HepG2 (cell line): ENCODE measurements at regions of chr18 and their contacts with region 1.

Region 1: GRCh38 chr18:37537868-37538525 is 27.6 kb downstream of the CELF4 start:
- DNase-seq: peak; percentile 22
- ATAC-seq: peak; percentile 96
- H3K4me3 ChIP-seq: no peak overlapping the region
- H3K27ac ChIP-seq: no peak overlapping the region
- H3K4me1 ChIP-seq: no peaks in the 10 kb centered on the region
- H3K27me3 ChIP-seq: peaks cover 3 to 81% of the 10 kb centered on the region in 2 experiments
- CTCF ChIP-seq: peak; percentile 91
- EP300 ChIP-seq: no peak
- POLR2A ChIP-seq: no peak
- RAD21 ChIP-seq: peak; percentile 62

Region 2: DNA sequence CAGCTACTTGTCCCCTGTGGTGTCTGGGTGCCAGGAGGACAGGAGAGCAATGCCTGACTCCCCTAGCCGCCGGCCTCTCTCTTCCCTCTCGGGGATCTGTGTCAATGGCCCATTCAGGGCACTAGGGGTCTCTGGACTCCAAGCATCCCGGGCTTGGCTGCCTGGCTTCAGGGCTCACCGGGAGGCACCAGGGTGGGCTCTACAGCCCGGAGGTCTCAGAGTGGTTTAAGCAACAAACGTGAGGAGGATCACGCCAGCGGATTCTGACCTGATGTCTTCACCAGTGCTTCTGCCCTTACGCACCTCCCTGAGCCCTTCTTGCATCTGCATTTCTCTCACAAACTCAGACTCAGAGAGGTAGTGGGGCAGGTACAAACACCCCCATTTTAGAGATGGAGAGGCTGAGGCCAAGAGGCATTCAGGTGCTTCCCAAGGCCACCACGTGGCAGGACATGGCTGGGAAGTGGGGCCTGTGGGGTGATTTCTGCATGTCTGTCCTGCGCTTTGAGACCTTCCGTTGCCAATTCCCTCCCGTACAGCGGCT is 215.4 kb before region 1 on chr18:
- CTCF ChIA-PET with region 1: no interaction called
- POLR2A ChIA-PET with region 1: no interaction called
- in situ Hi-C with region 1: no loop called
- intact Hi-C with region 1: loop called (anchors 5 kb)
- DNase-seq: peak; percentile 31
- ATAC-seq: peak; percentile 92
- H3K4me3 ChIP-seq: no peak overlapping the region
- H3K27ac ChIP-seq: no peak overlapping the region
- H3K4me1 ChIP-seq: no peaks in the 10 kb centered on the region
- H3K27me3 ChIP-seq: peaks cover 3 to 35% of the 10 kb centered on the region in 2 experiments; a peak in 4 of 5 replicates
- CTCF ChIP-seq: peak; percentile 92
- EP300 ChIP-seq: no peak
- POLR2A ChIP-seq: no peak
- RAD21 ChIP-seq: peak; percentile 59; the same call in 1 of the 2 replicates

Region 3: GRCh38 chr18:37341016-37341415 is 197.0 kb before region 1 on chr18:
- CTCF ChIA-PET with region 1: no interaction called
- POLR2A ChIA-PET with region 1: no interaction called
- in situ Hi-C with region 1: no loop called
- intact Hi-C with region 1: loop called (anchors 5 kb)
- DNase-seq: no peak
- ATAC-seq: no peak
- H3K4me3 ChIP-seq: no peak overlapping the region
- H3K27ac ChIP-seq: no peak overlapping the region
- H3K4me1 ChIP-seq: no peaks in the 10 kb centered on the region
- H3K27me3 ChIP-seq: peaks cover 0 to 9% of the 10 kb centered on the region in 2 experiments; a peak in 1 of 5 replicates
- CTCF ChIP-seq: no peak
- EP300 ChIP-seq: no peak
- POLR2A ChIP-seq: no peak
- RAD21 ChIP-seq: no peak

Region 4: DNA sequence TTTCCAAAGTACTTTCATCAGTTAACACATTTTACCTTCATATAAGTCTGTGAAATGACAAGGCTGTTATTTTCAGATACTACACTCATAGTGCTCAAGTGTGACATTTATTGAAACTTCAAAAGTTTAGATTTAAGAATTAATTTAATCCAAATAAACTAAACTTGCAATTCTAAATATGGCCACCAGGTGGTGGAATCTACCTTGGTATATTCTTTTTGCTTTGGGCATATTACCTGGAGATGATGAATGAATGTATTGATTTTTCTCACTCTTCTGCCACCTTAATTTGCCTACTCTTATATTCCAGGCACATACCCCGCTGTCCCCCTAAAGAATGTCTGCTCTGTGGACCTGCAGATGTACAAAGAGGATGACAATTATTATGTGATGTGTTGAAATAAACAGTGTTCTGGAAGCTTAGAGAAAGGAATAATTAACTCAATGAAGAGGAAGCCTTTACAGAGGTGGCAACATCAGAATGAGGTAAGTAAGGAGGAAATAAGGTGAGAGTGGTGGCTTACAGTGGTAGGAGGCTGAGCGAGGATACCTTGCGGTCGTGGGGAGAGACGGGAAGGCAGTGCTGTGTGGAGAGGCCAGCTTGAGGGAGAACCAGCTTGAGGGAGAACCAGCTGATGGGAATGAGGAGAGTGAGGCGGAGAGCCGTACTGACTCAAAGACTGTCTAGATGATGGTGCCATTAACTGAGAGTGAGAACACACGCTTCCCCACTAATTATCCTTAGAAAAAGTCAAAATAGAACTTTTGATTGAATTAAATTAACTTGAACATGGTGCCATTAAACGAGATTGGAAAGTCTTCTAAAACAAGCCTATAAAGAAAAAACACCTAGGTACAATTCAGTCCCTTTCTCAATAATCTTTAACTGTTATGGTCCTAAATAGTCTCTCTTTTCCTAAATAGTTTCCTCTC is 151.9 kb before region 1 on chr18:
- CTCF ChIA-PET with region 1: interaction called, 6 read pairs
- POLR2A ChIA-PET with region 1: no interaction called
- in situ Hi-C with region 1: no loop called
- intact Hi-C with region 1: loop called (anchors 1 kb)
- DNase-seq: peak; percentile 13
- ATAC-seq: no peak
- H3K4me3 ChIP-seq: no peak overlapping the region
- H3K27ac ChIP-seq: no peak overlapping the region
- H3K4me1 ChIP-seq: no peaks in the 10 kb centered on the region
- H3K27me3 ChIP-seq: peaks cover 4 to 8% of the 10 kb centered on the region in 2 experiments; a peak in 2 of 5 replicates
- CTCF ChIP-seq: peak; percentile 50
- EP300 ChIP-seq: no peak
- POLR2A ChIP-seq: no peak
- RAD21 ChIP-seq: no peak

Region 5: GRCh38 chr18:37445368-37445767 is 92.6 kb before region 1 on chr18:
- CTCF ChIA-PET with region 1: interaction called, 8 read pairs
- POLR2A ChIA-PET with region 1: no interaction called
- in situ Hi-C with region 1: loop called (anchors 5 kb)
- intact Hi-C with region 1: loop called (anchors 1 kb)
- DNase-seq: no peak
- ATAC-seq: no peak
- H3K4me3 ChIP-seq: no peak overlapping the region
- H3K27ac ChIP-seq: no peak overlapping the region
- H3K4me1 ChIP-seq: no peaks in the 10 kb centered on the region
- H3K27me3 ChIP-seq: peaks cover 4 to 42% of the 10 kb centered on the region in 2 experiments; a peak in 4 of 5 replicates
- CTCF ChIP-seq: no peak
- EP300 ChIP-seq: no peak
- POLR2A ChIP-seq: no peak
- RAD21 ChIP-seq: no peak

Region 6: GRCh38 chr18:37524498-37525261 is 13.3 kb before region 1 on chr18:
- CTCF ChIA-PET with region 1: no interaction called
- POLR2A ChIA-PET with region 1: no interaction called
- in situ Hi-C with region 1: no loop called
- intact Hi-C with region 1: no loop called
- DNase-seq: no peak
- ATAC-seq: peak; percentile 61
- H3K4me3 ChIP-seq: no peak overlapping the region
- H3K27ac ChIP-seq: no peak overlapping the region
- H3K4me1 ChIP-seq: no peaks in the 10 kb centered on the region
- H3K27me3 ChIP-seq: peaks cover 9 to 83% of the 10 kb centered on the region in 2 experiments
- CTCF ChIP-seq: no peak
- EP300 ChIP-seq: no peak
- POLR2A ChIP-seq: no peak
- RAD21 ChIP-seq: no peak